Activated naive CD4-positive, alpha-beta T cell treated with anti-CD3 and anti-CD28 coated beads for 36 hours (primary cell): ENCODE measurements at regions of chr13 and their contacts with region 1.

Region 1: GRCh38 chr13:27919934-27920676 is at the start of gene PDX1:
- DNase-seq: no peak
- H3K4me3 Mint-ChIP-seq: peak within 1 kb of the TSS; percentile 68
- H3K27ac Mint-ChIP-seq: no peak within 1 kb of the TSS
- H3K4me1 Mint-ChIP-seq: peaks cover 39% of the 10 kb centered on the region
- H3K27me3 Mint-ChIP-seq: peaks cover 77% of the 10 kb centered on the region
- total RNA-seq, gene PDX1: not detected

Region 2: DNA sequence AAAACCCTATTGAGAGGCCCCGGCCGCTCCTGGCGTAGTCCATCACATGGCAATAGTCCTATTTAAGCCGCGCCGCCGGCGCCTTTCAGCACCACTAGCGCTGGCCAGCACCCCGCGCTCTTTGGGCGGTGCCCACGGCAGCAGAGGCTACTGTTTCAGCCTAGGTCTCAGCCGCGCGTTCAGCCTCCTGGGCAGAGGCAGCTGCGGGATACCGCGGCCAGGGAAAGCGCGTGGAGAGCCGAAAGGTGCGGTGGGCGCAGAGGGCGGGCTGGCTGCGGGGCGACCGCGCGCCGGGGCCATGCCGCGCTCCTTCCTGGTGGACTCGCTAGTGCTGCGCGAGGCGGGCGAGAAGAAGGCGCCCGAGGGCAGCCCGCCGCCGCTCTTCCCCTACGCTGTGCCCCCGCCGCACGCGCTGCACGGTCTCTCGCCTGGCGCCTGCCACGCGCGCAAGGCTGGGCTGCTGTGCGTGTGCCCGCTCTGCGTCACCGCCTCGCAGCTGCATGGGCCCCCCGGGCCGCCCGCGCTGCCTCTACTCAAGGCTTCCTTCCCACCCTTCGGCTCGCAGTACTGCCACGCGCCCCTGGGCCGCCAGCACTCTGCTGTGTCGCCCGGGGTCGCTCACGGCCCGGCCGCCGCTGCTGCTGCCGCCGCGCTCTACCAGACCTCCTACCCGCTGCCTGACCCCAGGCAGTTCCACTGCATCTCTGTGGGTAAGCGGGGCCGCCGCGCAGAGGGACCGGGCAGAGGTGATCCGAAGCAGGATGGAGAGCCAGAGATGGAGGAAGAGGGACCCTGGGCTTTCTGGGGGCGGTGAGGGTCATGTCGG is 127.5 kb before region 1 on chr13 and contains the start of gene GSX1:
- CTCF ChIA-PET with region 1: no interaction called
- intact Hi-C with region 1: loop called (anchors 2 kb)
- DNase-seq: peak; percentile 69
- H3K4me3 Mint-ChIP-seq: peak within 1 kb of the TSS; percentile 71
- H3K27ac Mint-ChIP-seq: no peak within 1 kb of the TSS
- H3K4me1 Mint-ChIP-seq: peaks cover 38% of the 10 kb centered on the region
- H3K27me3 Mint-ChIP-seq: peaks cover 76% of the 10 kb centered on the region
- total RNA-seq, gene GSX1: not detected

Region 3: DNA sequence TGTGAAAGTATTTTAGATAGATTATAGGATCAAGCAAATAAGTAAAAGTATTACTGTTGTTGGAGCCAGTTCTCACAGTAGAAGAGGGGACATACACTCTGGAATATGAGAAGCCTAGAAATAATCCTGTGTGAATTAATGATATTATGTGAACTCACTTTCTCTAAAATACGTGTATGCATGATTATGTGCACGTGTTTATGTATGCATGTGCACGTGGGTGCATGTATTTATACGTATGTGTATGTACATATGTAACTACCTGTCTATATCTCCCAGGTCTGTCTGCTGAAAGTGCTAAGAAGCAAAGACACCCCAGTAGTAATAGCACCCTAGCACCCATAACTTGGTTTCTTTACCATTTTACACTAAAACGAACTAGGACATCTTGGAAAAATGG is 41.8 kb before region 1 on chr13:
- CTCF ChIA-PET with region 1: no interaction called
- intact Hi-C with region 1: no loop called
- DNase-seq: no peak
- H3K4me3 Mint-ChIP-seq: no peak overlapping the region
- H3K27ac Mint-ChIP-seq: no peak overlapping the region
- H3K4me1 Mint-ChIP-seq: no peaks in the 10 kb centered on the region
- H3K27me3 Mint-ChIP-seq: peaks cover 42% of the 10 kb centered on the region

Region 4: DNA sequence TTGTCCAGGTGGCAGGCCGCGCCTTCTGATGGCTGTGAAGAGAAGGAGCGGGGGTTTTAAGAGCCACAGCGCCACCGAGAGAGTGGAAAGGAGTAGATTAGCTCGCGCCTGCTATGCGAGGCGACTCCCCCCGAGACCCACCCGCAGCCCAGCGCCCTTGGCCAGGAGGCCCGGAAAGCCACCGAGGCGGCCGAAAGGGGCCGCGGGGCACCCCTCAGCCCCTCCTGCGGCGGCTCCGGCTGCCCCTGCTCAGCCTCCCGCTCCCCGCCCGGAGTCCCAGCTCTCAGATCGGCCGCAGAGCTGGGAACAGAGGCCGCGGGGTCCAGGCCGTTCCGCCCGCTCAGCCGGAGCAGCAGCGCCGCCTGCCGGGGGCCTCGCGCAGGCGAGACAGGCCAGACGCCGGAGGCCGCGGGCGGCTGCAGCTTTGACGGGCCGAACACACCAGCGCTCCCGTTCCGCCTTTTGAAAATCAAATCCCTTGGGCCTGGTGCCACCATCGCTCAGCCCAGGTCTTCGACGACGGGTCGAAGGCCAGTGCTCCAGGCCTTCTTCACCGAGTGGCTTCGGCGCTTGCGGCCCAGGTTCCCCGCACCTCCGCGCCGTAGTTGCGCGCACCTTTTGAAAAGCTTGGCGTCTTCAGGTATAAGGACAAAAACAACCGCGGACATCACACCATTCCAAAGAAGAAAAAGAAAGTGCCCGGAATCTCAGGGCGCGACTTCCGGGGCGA is 33.7 kb after region 1 on chr13:
- CTCF ChIA-PET with region 1: interaction called, 7 read pairs
- intact Hi-C with region 1: loop called (anchors 2 kb)
- DNase-seq: peak; percentile 71
- H3K4me3 Mint-ChIP-seq: peak overlapping the region; percentile 69
- H3K27ac Mint-ChIP-seq: no peak overlapping the region
- H3K4me1 Mint-ChIP-seq: peaks cover 8% of the 10 kb centered on the region
- H3K27me3 Mint-ChIP-seq: peaks cover 60% of the 10 kb centered on the region

Region 5: GRCh38 chr13:27968316-27969081 is 48.4 kb after region 1 on chr13:
- CTCF ChIA-PET with region 1: interaction called, 6 read pairs
- intact Hi-C with region 1: loop called (anchors 2 kb)
- DNase-seq: no peak
- H3K4me3 Mint-ChIP-seq: no peak overlapping the region
- H3K27ac Mint-ChIP-seq: no peak overlapping the region
- H3K4me1 Mint-ChIP-seq: peaks cover 25% of the 10 kb centered on the region
- H3K27me3 Mint-ChIP-seq: peaks cover 78% of the 10 kb centered on the region